Caco-2 (cell line): ENCODE measurements at regions of chr1 and their contacts with region 1.

Region 1: GRCh38 chr1:29202584-29203340 is 21.1 kb upstream of the SRSF4 start:
- DNase-seq: peak; percentile 89 to 92
- H3K4me3 ChIP-seq: no peak overlapping the region
- H3K4me3 Mint-ChIP-seq: no peak overlapping the region
- H3K27ac Mint-ChIP-seq: peak overlapping the region; percentile 3
- H3K4me1 ChIP-seq: peaks cover 13% of the 10 kb centered on the region
- H3K4me1 Mint-ChIP-seq: no peaks in the 10 kb centered on the region
- H3K27me3 ChIP-seq: no peaks in the 10 kb centered on the region
- H3K27me3 Mint-ChIP-seq: no peaks in the 10 kb centered on the region
- CTCF ChIP-seq: peak; percentile 71 to 77

Region 2: GRCh38 chr1:29033829-29034466 is 168.8 kb before region 1 on chr1:
- CTCF ChIA-PET with region 1: interaction called, 5 read pairs
- POLR2A ChIA-PET with region 1: interaction called, 3 read pairs
- intact Hi-C with region 1: loop called (anchors 5 kb)
- DNase-seq: peak in 1 of 2 experiments; percentile 12
- H3K4me3 ChIP-seq: no peak overlapping the region
- H3K4me3 Mint-ChIP-seq: no peak overlapping the region
- H3K27ac Mint-ChIP-seq: no peak overlapping the region
- H3K4me1 ChIP-seq: no peaks in the 10 kb centered on the region
- H3K4me1 Mint-ChIP-seq: no peaks in the 10 kb centered on the region
- H3K27me3 ChIP-seq: no peaks in the 10 kb centered on the region
- H3K27me3 Mint-ChIP-seq: no peaks in the 10 kb centered on the region
- CTCF ChIP-seq: peak; percentile 26 to 58

Region 3: GRCh38 chr1:29124366-29125236 is 78.2 kb before region 1 on chr1:
- CTCF ChIA-PET with region 1: interaction called, 11 read pairs
- POLR2A ChIA-PET with region 1: interaction called, 3 read pairs
- intact Hi-C with region 1: no loop called
- DNase-seq: peak; percentile 75 to 86
- H3K4me3 ChIP-seq: peak overlapping the region; percentile 69
- H3K4me3 Mint-ChIP-seq: peak overlapping the region; percentile 75
- H3K27ac Mint-ChIP-seq: peak overlapping the region; percentile 65
- H3K4me1 ChIP-seq: no peaks in the 10 kb centered on the region
- H3K4me1 Mint-ChIP-seq: no peaks in the 10 kb centered on the region
- H3K27me3 ChIP-seq: no peaks in the 10 kb centered on the region
- H3K27me3 Mint-ChIP-seq: no peaks in the 10 kb centered on the region
- CTCF ChIP-seq: peak; percentile 69 to 71

Region 4: DNA sequence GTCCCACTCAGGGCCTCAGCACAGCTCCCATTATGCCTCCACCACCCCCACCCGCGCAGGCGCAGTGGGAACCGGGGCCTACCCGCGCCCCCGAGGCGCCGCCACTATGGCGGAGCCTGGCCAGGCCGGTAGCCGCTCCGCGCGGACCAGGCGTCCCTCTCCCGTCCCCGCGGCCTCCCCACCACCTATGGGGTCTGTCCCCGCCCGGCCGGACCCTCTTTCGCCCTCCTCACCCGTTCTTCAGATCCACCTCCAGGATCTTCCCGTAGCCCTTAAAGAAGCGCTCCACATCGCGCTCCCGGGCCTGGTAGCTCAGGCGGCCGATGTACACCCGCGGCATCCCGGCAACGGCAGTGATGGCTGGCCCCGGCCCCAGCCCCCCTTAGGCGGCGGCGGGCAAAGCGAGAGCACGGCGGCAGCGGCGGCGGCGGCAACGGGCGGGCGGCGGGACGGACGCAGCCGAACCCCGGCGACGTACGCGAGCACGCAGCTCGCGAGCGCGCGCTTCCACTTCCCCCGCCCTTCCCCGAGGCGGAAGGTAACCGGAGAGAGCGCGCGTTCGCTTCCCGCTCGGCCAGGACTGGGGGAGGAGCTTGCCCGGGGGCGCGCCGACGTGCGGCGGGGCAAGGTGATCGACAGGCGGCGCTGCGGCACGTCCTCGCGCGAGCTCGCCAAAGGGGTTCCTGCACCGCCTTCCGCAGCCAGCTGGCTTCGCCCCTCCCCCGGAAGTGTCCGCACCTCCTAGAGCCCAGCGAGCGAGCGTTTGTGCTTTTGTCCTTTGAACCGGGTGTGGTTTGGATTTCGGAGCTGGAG is 21.1 kb before region 1 on chr1 and contains the start of gene SRSF4:
- CTCF ChIA-PET with region 1: interaction called, 28 read pairs
- POLR2A ChIA-PET with region 1: interaction called, 16 read pairs
- intact Hi-C with region 1: loop called (anchors 1 kb)
- DNase-seq: peak; percentile 97
- H3K4me3 ChIP-seq: peak within 1 kb of the TSS; percentile 88
- H3K4me3 Mint-ChIP-seq: peak within 1 kb of the TSS; percentile 74
- H3K27ac Mint-ChIP-seq: peak within 1 kb of the TSS; percentile 60
- H3K4me1 ChIP-seq: peaks cover 21% of the 10 kb centered on the region
- H3K4me1 Mint-ChIP-seq: peaks cover 20% of the 10 kb centered on the region
- H3K27me3 ChIP-seq: no peaks in the 10 kb centered on the region
- H3K27me3 Mint-ChIP-seq: no peaks in the 10 kb centered on the region
- CTCF ChIP-seq: peak; percentile 45 to 56
- total RNA-seq, gene SRSF4: 44.1 and 45.8 TPM in 2 replicates

Region 5: DNA sequence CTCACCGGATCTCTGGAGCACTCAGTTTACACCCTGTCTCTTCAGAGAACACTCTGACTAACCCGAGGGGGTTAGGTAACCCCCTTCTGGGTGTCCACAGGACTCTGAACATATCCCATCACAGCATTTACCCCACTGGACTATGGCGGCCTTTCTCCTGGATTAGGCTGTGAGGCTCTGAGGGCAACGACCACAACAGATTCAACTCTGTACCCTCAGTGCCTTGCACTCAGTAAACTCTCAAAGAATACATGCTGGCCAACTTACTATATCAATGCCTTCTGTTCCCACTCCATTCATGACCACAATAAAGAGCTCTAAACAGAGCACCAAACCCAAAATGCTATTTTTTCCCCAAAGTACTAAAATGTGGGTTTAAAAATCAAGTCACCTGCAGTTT is 22.6 kb after region 1 on chr1:
- CTCF ChIA-PET with region 1: interaction called, 13 read pairs
- POLR2A ChIA-PET with region 1: no interaction called
- intact Hi-C with region 1: no loop called
- DNase-seq: no peak
- H3K4me3 ChIP-seq: no peak overlapping the region
- H3K4me3 Mint-ChIP-seq: no peak overlapping the region
- H3K27ac Mint-ChIP-seq: no peak overlapping the region
- H3K4me1 ChIP-seq: 0 out of 2 replicates have a peak, but pooled peaks cover 4% of the 10 kb centered on the region
- H3K4me1 Mint-ChIP-seq: no peaks in the 10 kb centered on the region
- H3K27me3 ChIP-seq: no peaks in the 10 kb centered on the region
- H3K27me3 Mint-ChIP-seq: no peaks in the 10 kb centered on the region
- CTCF ChIP-seq: no peak

Region 6: DNA sequence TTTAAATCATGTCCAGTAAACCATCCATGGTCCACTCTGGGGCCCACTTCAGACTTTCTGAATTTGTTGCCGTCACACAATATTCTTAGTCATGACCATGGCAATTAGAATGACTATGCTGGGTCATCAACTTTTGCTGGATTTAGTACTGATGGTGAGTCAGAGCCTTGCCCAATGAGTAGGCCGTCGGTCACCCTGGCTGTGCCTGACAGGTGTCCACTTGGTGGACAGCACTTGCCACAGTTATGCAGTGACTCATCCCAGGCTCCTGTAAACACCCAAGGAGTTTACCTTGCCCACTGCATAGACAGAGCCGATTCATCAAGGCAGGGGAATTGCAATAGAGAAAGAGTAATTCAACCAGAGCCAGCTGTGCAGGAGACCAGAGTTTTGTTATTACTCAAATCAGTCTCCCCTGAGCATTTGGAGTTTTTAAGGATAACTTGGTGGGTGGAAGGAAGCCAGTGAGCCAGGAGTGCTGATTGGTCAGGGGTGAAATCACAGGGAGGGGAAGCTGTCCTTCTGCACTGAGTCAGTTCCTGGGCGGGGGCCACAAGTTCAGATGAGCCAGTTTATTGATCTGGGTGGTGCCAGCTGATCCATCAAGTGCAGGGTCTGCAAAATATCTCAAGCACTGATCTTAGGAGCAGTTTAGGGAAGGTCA is 367.3 kb after region 1 on chr1:
- CTCF ChIA-PET with region 1: no interaction called
- POLR2A ChIA-PET with region 1: no interaction called
- intact Hi-C with region 1: no loop called
- DNase-seq: no peak
- H3K4me3 ChIP-seq: no peak overlapping the region
- H3K4me3 Mint-ChIP-seq: no peak overlapping the region
- H3K27ac Mint-ChIP-seq: no peak overlapping the region
- H3K4me1 ChIP-seq: no peaks in the 10 kb centered on the region
- H3K4me1 Mint-ChIP-seq: no peaks in the 10 kb centered on the region
- H3K27me3 ChIP-seq: no peaks in the 10 kb centered on the region
- H3K27me3 Mint-ChIP-seq: no peaks in the 10 kb centered on the region
- CTCF ChIP-seq: no peak